ENCODE measurements at regions of chr11 and their contacts with region 1.

Region 1: DNA sequence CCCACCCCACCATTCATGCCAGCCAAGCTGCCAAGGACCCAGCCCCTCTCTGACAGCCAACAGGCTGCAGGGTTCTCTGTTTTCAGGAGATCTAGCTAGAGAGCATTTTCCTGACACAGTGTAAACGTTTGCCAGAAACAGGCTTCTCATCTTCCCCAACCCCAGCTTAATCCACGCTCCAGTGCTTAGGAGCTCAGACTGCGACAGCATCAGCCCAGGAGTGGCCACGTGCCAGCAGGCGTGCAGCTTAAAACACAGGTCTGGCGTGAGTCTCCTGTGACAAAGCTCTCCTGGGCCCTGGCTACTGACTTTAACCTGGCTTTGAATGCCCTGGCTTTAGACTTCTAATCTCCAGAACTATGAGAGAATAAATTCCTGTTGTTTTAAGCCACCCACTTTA is 66.6 kb downstream of the GALNT18 start:
- DNase-seq: no peak
- ATAC-seq: no peak
- H3K4me3 ChIP-seq: no peak overlapping the region
- H3K4me3 Mint-ChIP-seq: no peak overlapping the region
- H3K27ac ChIP-seq: no peak overlapping the region
- H3K27ac Mint-ChIP-seq: no peak overlapping the region
- H3K4me1 ChIP-seq: no peaks in the 10 kb centered on the region
- H3K4me1 Mint-ChIP-seq: no peaks in the 10 kb centered on the region
- H3K27me3 ChIP-seq: no peaks in the 10 kb centered on the region
- H3K27me3 Mint-ChIP-seq: peaks cover 6% of the 10 kb centered on the region
- CTCF ChIP-seq: no peak

Region 2: DNA sequence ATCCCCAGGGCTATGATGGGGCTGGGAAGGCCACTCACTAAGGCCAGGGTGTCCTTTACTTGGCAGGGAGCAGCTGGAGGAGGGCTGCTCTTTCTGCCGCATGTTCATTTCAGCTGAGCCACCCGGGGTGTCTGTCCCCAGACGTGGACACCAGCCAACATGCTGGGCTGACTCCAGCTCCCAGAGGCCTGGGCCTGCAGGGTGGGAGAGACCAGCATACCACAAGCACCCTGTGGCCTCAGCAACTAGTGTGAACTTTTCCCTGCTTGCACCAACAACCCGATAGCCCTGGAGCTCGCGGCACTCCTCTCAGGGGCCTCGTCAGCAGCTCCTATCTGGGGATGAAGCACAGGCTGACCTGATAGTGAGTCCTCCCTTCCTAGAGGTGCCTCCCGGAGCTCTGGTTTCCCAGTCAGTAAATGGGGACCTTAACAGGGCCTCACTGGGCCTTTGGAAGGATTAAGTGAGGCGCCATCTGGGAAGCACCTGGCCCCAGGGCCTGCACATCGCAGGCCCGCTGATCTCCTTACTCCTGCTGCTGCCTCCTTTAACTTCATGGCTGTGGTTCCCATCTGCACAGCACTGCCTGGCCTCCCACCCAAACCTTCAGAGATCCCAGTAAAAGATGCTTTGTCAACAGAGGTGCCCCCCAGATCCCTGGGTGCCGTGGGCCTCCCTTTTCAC is 16.8 kb before region 1 on chr11:
- CTCF ChIA-PET with region 1: no interaction called
- POLR2A ChIA-PET with region 1: no interaction called
- intact Hi-C with region 1: loop called in 1 of 2 experiments (anchors 1 kb)
- DNase-seq: no peak
- ATAC-seq: no peak
- H3K4me3 ChIP-seq: no peak overlapping the region
- H3K4me3 Mint-ChIP-seq: no peak overlapping the region
- H3K27ac ChIP-seq: no peak overlapping the region
- H3K27ac Mint-ChIP-seq: no peak overlapping the region
- H3K4me1 ChIP-seq: no peaks in the 10 kb centered on the region
- H3K4me1 Mint-ChIP-seq: no peaks in the 10 kb centered on the region
- H3K27me3 ChIP-seq: no peaks in the 10 kb centered on the region
- H3K27me3 Mint-ChIP-seq: peaks cover 2% of the 10 kb centered on the region
- CTCF ChIP-seq: no peak

Measured in CD8-positive, alpha-beta T cell (primary cell).